ENCODE measurements at regions of chr17 and their contacts with region 1.

Region 1: GRCh38 chr17:40287494-40288369 is at the start of gene CDC6:
- DNase-seq: peak; percentile 88

Region 2: GRCh38 chr17:40203131-40203530 is 84.6 kb before region 1 on chr17:
- CTCF ChIA-PET with region 1: interaction called, 7 read pairs
- POLR2A ChIA-PET with region 1: interaction called, 11 read pairs
- DNase-seq: no peak

Region 3: DNA sequence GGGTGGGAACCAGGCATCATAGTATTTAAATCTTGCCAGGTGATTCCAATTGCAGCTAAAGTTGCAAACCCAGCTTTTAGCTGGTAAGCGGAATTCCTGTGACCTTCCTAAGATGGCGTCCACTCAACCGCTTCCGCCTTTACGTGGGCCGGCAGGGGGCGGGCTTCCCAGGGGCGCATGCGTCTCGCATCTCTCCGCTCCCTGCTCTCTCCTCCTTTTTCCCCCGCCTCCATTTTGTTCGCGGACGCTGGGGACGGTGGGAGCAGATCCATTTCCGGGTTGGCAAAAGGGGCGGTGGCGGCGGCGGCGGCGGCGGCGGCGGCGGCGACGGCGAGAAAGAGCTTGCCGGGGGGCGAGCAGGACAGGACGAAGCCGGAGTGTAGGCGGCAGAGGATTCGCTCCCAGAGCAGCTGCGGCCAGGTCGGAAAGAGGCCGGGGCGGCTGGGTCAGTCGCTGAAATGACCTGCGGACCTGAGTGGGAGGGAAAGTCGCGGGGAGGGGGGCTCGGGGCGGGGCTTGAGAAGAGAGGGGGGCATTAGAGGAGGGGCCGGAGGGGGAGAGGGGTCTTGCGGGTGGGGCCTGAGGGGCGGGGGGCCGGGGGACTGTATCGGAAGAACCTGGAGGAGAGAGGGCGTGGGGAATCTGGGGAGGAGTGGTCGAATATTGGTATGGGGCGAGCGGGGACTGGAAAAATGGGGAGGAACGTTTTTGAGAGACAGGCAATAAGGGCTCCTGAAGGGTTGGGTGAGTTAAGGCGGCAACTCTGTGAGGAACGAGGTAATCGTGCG is 68.5 kb before region 1 on chr17 and contains the start of gene WIPF2:
- CTCF ChIA-PET with region 1: interaction called, 3 read pairs
- POLR2A ChIA-PET with region 1: interaction called, 31 read pairs
- DNase-seq: peak; percentile 88

Region 4: DNA sequence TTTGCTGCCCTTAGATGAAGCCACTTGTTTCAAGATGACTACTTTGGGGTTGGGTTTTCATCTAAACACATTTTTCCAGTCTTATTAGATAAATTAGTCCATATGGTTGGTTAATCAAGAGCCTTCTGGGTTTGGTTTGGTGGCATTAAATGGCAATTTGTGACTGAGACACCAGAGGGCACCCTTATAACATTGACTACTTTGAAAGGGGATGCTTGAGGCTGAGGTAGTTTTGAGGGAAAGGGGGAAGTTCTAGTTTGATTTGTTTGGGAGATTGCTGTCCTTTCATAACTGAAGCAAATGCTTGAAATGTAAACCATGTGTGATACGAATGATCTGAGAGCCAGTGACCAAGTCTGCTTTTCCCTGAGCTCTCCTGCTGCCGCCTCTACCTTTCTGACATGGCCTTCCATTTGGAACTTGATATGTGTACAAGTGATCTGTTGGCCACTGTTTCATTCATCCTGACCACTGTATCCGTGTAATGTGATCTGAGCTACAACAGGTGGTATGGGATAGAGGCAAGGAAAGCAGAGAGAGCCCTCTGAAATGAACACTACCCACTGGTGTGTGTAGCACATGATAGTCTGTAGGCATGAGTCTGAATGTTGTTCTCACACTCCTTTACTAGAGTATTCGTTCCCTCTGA is 15.4 kb after region 1 on chr17:
- CTCF ChIA-PET with region 1: interaction called, 4 read pairs
- POLR2A ChIA-PET with region 1: interaction called, 14 read pairs
- DNase-seq: peak; percentile 34

Region 5: GRCh38 chr17:40317880-40318829 is 30.4 kb after region 1 on chr17:
- CTCF ChIA-PET with region 1: no interaction called
- POLR2A ChIA-PET with region 1: interaction called, 12 read pairs
- DNase-seq: peak; percentile 93

Region 6: GRCh38 chr17:40371261-40371929 is 83.7 kb after region 1 on chr17:
- CTCF ChIA-PET with region 1: no interaction called
- POLR2A ChIA-PET with region 1: no interaction called
- DNase-seq: no peak

Measured in HEK293T (cell line).